ENCODE measurements at regions of chr16 and their contacts with region 1.

Region 1: DNA sequence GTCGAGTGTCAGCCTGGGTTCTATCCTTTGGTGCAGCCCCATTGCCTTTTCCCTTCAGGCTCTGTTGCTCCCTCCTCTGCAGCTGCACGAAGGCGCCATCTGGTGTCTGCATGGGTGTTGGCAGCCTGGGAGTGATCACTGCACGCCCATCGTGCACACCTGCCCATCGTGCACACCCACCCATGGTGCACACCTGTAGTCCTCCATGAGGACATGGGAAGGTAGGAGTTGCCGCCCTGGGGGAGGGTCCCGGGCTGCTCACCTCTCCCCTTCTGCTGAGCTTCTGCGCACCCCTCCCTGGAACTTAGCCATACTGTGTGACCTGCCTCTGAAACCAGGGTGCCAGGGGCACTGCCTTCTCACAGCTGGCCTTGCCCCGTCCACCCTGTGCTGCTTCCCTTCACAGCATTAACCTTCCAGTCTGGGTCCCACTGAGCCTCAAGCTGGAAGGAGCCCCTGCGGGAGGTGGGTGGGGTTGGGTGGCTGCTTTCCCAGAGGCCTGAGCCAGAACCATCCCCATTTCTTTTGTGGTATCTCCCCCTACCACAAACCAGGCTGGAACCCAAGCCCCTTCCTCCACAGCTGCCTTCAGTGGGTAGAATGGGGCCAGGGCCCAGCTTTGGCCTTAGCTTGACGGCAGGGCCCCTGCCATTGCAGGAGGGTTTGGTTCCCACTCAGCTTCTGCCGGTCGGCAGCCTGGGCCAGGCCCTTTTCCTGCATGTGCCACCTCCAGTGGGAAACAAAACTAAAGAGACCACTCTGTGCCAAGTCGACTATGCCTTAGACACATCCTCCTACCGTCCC is 2.9 kb downstream of the CTRL start:
- DNase-seq: peak; percentile 56 to 77 (median 69)
- H3K4me3 ChIP-seq: no peak overlapping the region
- H3K27ac ChIP-seq: no peak overlapping the region
- H3K4me1 ChIP-seq: no peaks in the 10 kb centered on the region
- H3K27me3 ChIP-seq: no peaks in the 10 kb centered on the region

Region 2: DNA sequence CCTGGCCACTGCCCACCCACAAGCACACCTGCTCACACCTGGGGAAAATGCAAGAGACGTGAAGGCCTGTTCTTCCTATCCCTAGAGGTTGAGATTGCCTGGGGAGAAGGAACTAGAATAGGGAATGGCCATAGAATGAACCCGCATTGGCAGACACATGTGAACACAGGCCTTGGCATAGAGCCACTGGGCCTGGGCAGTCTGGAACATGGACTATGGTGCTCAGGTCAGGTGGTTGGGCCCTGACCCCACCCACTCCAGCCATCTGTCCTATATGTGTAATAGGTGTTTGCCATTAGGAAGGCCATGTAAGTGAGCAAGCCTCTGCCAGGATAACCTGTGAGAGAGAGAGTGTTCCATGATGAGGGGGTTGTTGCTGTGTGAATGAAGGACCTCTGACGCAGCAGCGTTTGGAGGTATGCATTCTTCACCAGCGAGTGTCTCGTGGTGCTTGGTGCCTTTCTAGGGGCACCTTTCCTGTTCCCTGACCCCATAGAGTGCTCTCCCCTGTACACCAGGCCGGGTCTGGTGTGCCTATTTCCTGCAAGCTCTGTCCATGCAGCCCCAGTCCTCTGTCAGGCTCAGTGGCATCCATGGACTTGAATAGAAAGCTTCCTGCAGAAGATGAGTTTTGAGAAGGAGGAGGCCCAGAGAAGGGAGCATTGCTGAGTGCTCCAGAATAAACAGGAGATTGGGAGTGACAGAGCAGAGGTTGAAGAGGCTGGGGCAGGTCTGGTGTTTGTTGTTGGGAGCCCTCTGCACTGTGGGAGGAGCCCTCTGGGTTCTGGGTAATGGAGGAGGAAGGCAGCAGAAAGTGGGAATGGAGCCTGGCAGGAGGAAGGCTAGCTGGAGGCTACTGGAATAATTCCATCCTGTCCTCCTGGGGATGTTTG is 12.7 kb before region 1 on chr16:
- CTCF ChIA-PET with region 1: interaction called, 16 read pairs
- POLR2A ChIA-PET with region 1: no interaction called
- DNase-seq: no peak
- H3K4me3 ChIP-seq: no peak overlapping the region
- H3K27ac ChIP-seq: no peak overlapping the region
- H3K4me1 ChIP-seq: peaks cover 0 to under 1% (median 0%) of the 10 kb centered on the region in 4 experiments
- H3K27me3 ChIP-seq: no peaks in the 10 kb centered on the region

Measured in common myeloid progenitor, CD34-positive (primary cell).